H1 (cell line): ENCODE measurements at regions of chr3 and their contacts with region 1.

Region 1: DNA sequence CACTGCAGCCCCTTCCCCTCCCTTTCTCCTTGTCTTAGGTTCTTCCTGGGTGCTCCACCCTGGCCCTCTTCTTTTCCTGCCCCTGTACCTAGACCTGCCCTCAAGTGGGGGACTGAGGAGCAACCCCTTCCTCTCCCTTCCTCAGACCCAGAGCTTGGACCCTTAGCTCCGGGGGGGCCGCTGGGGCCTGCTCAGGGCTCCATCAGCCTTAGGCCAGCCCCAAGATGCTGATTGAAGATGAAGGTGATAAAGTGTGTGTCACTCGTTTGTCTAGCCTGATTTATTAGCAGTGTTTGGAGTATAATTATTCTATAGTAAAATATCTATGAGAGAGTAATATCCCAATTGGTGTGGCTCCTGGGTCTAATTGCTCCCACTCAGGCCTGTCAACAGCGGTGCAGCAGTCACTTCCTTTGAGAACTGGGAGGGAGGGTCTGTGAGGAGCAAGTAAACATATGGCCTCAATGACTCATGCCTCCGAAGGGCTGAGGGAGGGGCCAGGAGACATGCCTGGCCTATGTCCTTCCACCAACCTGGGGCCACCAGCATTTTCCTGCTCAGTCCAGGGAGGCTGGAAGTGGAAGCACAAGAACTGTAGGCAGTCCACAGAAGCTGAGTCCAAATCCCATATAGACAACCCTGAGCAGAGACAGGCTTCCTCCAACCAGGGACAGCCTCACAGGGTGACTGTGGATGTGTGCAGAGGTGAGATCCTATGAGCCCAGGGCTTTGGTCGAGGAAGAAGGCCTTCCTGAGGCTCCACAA is 123.2 kb downstream of the DNAJB8 start:
- DNase-seq: no peak
- H3K4me3 ChIP-seq: no peak overlapping the region
- H3K27ac ChIP-seq: no peak overlapping the region
- H3K4me1 ChIP-seq: peaks cover 0 to under 1% (median 0%) of the 10 kb centered on the region in 4 experiments; a peak in 2 of 7 replicates
- H3K27me3 ChIP-seq: no peaks in the 10 kb centered on the region
- CTCF ChIP-seq: no peak
- EP300 ChIP-seq: no peak
- POLR2A ChIP-seq: no peak
- RAD21 ChIP-seq: no peak

Region 2: GRCh38 chr3:128353991-128354687 is 10.7 kb after region 1 on chr3:
- CTCF ChIA-PET with region 1: interaction called, 31 read pairs
- POLR2A ChIA-PET with region 1: no interaction called
- DNase-seq: no peak
- H3K4me3 ChIP-seq: no peak overlapping the region
- H3K27ac ChIP-seq: no peak overlapping the region
- H3K4me1 ChIP-seq: peaks cover 2 to 4% (median 3%) of the 10 kb centered on the region in 4 experiments
- H3K27me3 ChIP-seq: no peaks in the 10 kb centered on the region
- CTCF ChIP-seq: no peak
- EP300 ChIP-seq: no peak
- POLR2A ChIP-seq: no peak
- RAD21 ChIP-seq: no peak